ENCODE measurements at regions of chr1 and their contacts with region 1.

Region 1: GRCh38 chr1:163321311-163322305 is at the start of gene NUF2:
- DNase-seq: peak; percentile 99
- H3K4me3 ChIP-seq: peak within 1 kb of the TSS; percentile 79
- CTCF ChIP-seq: no peak

Region 2: GRCh38 chr1:162854245-162854882 is 467.2 kb before region 1 on chr1:
- in situ Hi-C with region 1: loop called (anchors 25 kb)
- DNase-seq: peak; percentile 87
- H3K4me3 ChIP-seq: no peak overlapping the region
- CTCF ChIP-seq: peak; percentile 81

Region 3: DNA sequence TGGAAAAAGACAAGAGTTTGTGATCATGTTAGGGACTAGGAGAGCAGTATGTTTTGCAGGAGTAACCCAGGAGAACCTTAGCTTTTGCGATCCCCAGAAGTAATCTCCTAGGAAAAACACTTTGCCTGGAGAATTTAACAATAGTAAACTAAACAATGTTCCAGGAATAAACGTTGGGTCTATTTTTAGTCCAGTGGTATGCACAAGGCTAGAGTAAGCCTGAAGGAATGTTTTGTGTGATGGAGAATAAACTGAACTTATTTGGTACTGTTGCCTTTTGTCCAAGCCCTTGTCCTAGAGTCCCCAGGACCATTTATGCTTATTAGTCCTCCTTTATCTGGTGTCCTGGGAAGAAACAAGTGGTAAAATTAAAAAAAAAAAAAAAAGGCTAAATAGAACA is 90.2 kb before region 1 on chr1:
- in situ Hi-C with region 1: no loop called
- DNase-seq: peak; percentile 69
- H3K4me3 ChIP-seq: no peak overlapping the region
- CTCF ChIP-seq: no peak